Endothelial cell of umbilical vein (primary cell): ENCODE measurements at regions of chr6 and their contacts with region 1.

Region 1: DNA sequence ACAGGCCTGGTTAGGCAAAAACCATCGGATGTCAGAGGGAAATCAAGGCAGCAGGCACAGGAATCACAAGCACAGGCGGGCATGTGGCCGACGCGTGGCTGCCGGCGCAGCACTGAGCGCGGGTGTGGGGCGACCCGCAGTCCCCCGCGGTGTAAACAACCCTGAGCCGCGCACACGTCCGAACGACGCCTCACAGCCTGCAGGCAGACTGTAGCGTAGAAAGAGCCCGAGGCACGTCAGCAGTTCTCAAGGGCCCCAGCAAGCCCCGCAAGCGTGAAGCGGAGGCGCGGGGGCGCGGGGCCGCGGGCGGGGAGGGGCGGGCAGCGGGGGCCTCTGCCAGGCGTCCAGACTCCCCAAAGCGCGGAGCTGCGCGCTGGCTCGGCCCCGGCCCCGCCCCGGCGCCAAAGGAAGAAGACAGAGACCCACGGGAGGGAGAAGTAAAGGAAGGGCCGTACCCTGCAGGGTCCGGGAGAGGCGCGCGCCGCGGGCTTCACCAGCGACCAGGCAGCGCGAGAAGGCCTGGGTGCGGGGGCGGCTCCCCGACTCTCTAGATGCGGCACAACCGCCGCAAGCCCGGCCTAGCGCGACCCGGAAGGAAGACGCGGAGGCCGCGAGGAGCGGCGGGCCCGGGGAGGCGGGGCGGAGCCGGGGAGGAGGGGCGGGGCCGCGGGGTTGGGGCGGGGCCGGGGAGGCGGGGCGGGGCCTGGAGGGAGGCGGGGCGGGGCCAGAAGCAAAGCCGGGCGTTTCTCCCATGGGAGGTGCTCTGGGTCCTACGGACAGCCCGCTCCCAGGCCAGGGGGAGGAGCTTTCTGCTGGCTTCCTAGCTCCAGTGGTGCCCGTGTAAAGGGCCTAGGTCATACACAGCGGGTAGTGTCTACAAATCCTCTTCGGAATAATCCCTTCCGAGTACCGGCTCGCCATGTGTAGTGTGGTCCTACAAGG is at the start of gene FBXL4:
- DNase-seq: peak; percentile 74
- H3K4me3 ChIP-seq: peak within 1 kb of the TSS; percentile 46 to 92 (median 92)
- H3K27ac ChIP-seq: peak within 1 kb of the TSS; percentile 71
- H3K4me1 ChIP-seq: peaks cover 9% of the 10 kb centered on the region
- H3K27me3 ChIP-seq: peaks cover 5 to 19% of the 10 kb centered on the region in 2 experiments
- CTCF ChIP-seq: no peak
- POLR2A ChIP-seq: peak; percentile 65
- total RNA-seq, gene FBXL4: 9.4 and 9.8 TPM in 2 replicates

Region 2: DNA sequence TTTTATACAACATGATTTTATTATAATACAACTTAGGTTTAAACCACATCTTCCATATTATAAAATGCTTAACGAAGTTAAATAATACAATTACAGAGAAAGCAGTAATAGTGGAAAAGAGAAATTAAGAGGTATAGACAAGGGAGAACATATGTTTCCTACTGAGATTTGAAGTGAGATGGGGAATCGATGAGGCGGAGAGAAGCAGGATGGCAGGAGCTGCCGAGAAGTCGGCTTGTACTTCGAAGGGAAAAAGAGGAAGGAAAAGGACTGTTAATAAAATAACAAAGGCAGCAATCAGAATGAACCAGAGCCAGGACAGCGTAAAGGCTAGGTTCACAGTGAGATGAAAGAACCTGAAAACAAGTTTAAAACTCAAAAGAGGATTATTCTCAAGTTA is 15.2 kb before region 1 on chr6:
- CTCF ChIA-PET with region 1: no interaction called
- POLR2A ChIA-PET with region 1: no interaction called
- dilution Hi-C with region 1: no loop called
- intact Hi-C with region 1: loop called (anchors 1 kb)
- DNase-seq: peak; percentile 68
- H3K4me3 ChIP-seq: no peak overlapping the region
- H3K27ac ChIP-seq: no peak overlapping the region
- H3K4me1 ChIP-seq: peaks cover 8% of the 10 kb centered on the region
- H3K27me3 ChIP-seq: no peaks in the 10 kb centered on the region
- CTCF ChIP-seq: no peak
- POLR2A ChIP-seq: no peak